Common myeloid progenitor, CD34-positive (primary cell): ENCODE measurements at regions of chr3 and their contacts with region 1.

Region 1: DNA sequence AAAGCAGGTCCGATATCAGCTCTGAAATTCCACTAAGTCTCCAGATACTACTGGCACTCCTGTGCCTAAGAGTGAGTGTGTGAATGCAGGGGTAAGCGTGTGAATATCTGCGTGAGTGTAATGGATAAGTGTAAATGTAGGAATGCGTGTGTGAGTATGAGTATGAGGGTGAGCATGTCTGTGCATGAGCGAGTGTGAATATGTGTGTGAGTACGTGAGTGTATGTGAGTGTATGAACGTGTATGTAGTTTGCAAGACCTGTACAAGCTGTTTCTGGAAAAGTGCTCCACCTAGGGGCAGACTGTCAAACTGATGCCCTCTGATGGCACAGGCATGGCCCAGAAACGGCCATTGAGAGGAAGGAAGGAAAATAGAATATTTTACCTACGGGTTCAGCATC is 24.4 kb upstream of the FRMD4B start:
- DNase-seq: peak; percentile 81 to 89 (median 86)
- H3K4me3 ChIP-seq: peak overlapping the region in 1 of 7 experiments; percentile 14
- H3K27ac ChIP-seq: no peak overlapping the region
- H3K4me1 ChIP-seq: peaks cover 0 to 14% (median 7%) of the 10 kb centered on the region in 4 experiments
- H3K27me3 ChIP-seq: no peaks in the 10 kb centered on the region

Region 2: DNA sequence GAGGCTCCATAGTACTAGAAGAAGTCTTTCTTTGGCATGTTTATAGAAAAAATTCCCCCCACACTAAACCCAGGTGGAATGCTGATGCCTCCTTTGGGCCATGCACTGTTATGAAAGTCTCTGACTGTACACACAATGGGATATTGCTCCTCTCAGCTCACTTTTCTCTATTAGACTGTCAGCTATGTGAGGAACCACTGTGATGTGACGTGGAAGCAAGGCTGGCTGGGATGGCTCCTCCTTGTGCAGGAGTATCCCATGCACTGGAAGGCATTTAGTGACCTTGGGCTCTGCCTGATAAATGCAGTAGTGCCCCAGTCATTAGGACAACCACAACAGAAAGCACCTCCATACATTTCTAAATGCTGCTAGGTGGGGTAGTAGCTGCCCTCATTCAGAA is 18.7 kb before region 1 on chr3:
- CTCF ChIA-PET with region 1: interaction called, 34 read pairs
- POLR2A ChIA-PET with region 1: no interaction called
- DNase-seq: no peak
- H3K4me3 ChIP-seq: no peak overlapping the region
- H3K27ac ChIP-seq: no peak overlapping the region
- H3K4me1 ChIP-seq: peaks cover 8 to 15% (median 13%) of the 10 kb centered on the region in 4 experiments
- H3K27me3 ChIP-seq: no peaks in the 10 kb centered on the region

Region 3: GRCh38 chr3:69491975-69492374 is 81.7 kb after region 1 on chr3:
- CTCF ChIA-PET with region 1: no interaction called
- POLR2A ChIA-PET with region 1: no interaction called
- DNase-seq: peak; percentile 4 to 50 (median 34)
- H3K4me3 ChIP-seq: no peak overlapping the region
- H3K27ac ChIP-seq: no peak overlapping the region
- H3K4me1 ChIP-seq: peaks cover 0 to 19% (median 6%) of the 10 kb centered on the region in 4 experiments
- H3K27me3 ChIP-seq: no peaks in the 10 kb centered on the region

Region 4: GRCh38 chr3:69558912-69559311 is 148.7 kb after region 1 on chr3:
- CTCF ChIA-PET with region 1: no interaction called
- POLR2A ChIA-PET with region 1: no interaction called
- DNase-seq: no peak
- H3K4me3 ChIP-seq: no peak overlapping the region
- H3K27ac ChIP-seq: no peak overlapping the region
- H3K4me1 ChIP-seq: no peaks in the 10 kb centered on the region
- H3K27me3 ChIP-seq: no peaks in the 10 kb centered on the region